A673 (cell line): ENCODE measurements at regions of chr9 and their contacts with region 1.

Region 1: GRCh38 chr9:35051069-35051967 is 21.1 kb downstream of the VCP start:
- DNase-seq: peak; percentile 71
- H3K4me3 ChIP-seq: no peak overlapping the region
- H3K27ac ChIP-seq: no peak overlapping the region
- H3K4me1 ChIP-seq: no peaks in the 10 kb centered on the region
- H3K27me3 ChIP-seq: no peaks in the 10 kb centered on the region
- CTCF ChIP-seq: peak; percentile 72

Region 2: GRCh38 chr9:34603610-34604231 is 447.6 kb before region 1 on chr9:
- CTCF ChIA-PET with region 1: no interaction called
- POLR2A ChIA-PET with region 1: no interaction called
- intact Hi-C with region 1: no loop called
- DNase-seq: peak; percentile 88
- H3K4me3 ChIP-seq: no peak overlapping the region
- H3K27ac ChIP-seq: no peak overlapping the region
- H3K4me1 ChIP-seq: no peaks in the 10 kb centered on the region
- H3K27me3 ChIP-seq: no peaks in the 10 kb centered on the region
- CTCF ChIP-seq: peak; percentile 96

Region 3: GRCh38 chr9:34994260-34994899 is 56.9 kb before region 1 on chr9:
- CTCF ChIA-PET with region 1: interaction called, 4 read pairs
- POLR2A ChIA-PET with region 1: interaction called, 10 read pairs
- intact Hi-C with region 1: no loop called
- DNase-seq: peak; percentile 72
- H3K4me3 ChIP-seq: no peak overlapping the region
- H3K27ac ChIP-seq: peak overlapping the region; percentile 62
- H3K4me1 ChIP-seq: peaks cover 33% of the 10 kb centered on the region
- H3K27me3 ChIP-seq: no peaks in the 10 kb centered on the region
- CTCF ChIP-seq: peak; percentile 76

Region 4: DNA sequence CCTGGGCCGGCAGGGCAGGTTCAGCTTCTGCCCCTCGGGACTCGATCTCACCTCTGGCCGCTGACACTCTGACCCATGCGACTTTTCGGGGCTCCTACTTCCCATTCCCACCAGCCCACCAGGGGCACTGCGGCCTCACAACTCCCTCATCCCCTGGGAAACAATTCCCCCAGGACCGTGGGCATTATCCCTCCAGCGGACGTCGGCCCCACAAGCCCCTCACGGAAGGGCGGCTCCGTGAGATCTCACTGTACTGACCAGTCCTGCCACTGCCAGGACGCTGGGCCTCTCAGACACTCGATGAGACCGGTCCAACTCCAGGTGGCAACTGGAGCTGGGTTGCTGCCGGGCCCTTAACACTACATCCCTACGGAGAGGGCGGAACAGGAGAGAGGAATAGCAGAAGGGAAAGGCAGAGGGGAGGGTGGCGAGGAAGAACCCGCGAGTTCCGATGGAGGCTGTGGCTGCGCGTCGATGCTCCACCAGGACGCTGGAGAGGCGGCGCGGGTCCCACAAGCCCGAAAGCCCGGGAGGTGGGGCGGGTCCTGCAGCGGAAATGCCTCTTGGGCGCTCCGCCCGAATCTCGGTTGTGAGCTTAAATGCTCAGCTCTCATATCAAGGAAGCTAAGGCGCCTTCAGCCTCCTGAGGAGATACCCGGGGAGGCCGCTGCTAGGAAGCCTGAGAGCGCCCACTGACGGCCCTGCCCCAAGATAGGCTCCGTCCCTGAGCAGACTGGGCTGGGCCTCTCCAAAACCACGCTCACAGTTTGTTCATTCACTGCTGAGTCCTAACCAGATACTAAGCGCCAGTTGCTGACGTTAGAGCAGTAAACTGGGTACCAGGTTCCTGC is 15.2 kb before region 1 on chr9:
- CTCF ChIA-PET with region 1: interaction called, 10 read pairs
- POLR2A ChIA-PET with region 1: no interaction called
- intact Hi-C with region 1: no loop called
- DNase-seq: peak; percentile 78
- H3K4me3 ChIP-seq: peak overlapping the region; percentile 13
- H3K27ac ChIP-seq: no peak overlapping the region
- H3K4me1 ChIP-seq: peaks cover 3% of the 10 kb centered on the region
- H3K27me3 ChIP-seq: no peaks in the 10 kb centered on the region
- CTCF ChIP-seq: no peak; the same call in 1 of the 2 replicates

Region 5: GRCh38 chr9:35152936-35153335 is 101.6 kb after region 1 on chr9:
- CTCF ChIA-PET with region 1: no interaction called
- POLR2A ChIA-PET with region 1: no interaction called
- intact Hi-C with region 1: no loop called
- DNase-seq: no peak
- H3K4me3 ChIP-seq: no peak overlapping the region
- H3K27ac ChIP-seq: no peak overlapping the region
- H3K4me1 ChIP-seq: no peaks in the 10 kb centered on the region
- H3K27me3 ChIP-seq: no peaks in the 10 kb centered on the region
- CTCF ChIP-seq: no peak